ENCODE measurements at regions of chr2 and their contacts with region 1.

Region 1: DNA sequence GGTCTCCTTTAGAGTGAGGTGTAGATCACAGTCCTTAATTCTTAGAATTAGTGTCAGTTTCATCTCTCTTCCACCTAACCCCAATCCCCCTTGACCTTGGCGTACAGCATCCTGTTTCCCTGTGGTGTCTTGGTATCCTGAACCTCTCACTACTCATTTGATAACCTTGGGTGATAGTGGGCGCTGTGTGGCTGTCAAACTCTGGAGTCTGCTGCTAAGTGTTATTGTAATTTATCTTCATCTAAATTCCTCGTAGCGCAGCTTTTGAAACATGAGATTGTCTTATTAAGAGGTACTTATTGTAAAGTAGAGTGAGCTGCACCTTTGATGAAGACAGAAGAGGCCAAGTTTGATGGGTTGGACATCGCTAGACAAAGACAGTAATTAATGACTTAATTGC is 222.6 kb upstream of the SPRED2 start:
- DNase-seq: no peak
- ATAC-seq: no peak
- H3K4me3 Mint-ChIP-seq: no peak overlapping the region
- H3K27ac Mint-ChIP-seq: no peak overlapping the region
- H3K4me1 Mint-ChIP-seq: 0 out of 2 replicates have a peak, but pooled peaks cover 5% of the 10 kb centered on the region
- H3K27me3 Mint-ChIP-seq: no peaks in the 10 kb centered on the region
- CTCF ChIP-seq: no peak

Region 2: GRCh38 chr2:65638443-65638842 is 16.6 kb before region 1 on chr2:
- CTCF ChIA-PET with region 1: interaction called, 12 read pairs
- POLR2A ChIA-PET with region 1: no interaction called
- DNase-seq: no peak
- ATAC-seq: peak; percentile 77
- H3K4me3 Mint-ChIP-seq: no peak overlapping the region
- H3K27ac Mint-ChIP-seq: no peak overlapping the region
- H3K4me1 Mint-ChIP-seq: 0 out of 2 replicates have a peak, but pooled peaks cover 3% of the 10 kb centered on the region
- H3K27me3 Mint-ChIP-seq: no peaks in the 10 kb centered on the region
- CTCF ChIP-seq: no peak

Region 3: DNA sequence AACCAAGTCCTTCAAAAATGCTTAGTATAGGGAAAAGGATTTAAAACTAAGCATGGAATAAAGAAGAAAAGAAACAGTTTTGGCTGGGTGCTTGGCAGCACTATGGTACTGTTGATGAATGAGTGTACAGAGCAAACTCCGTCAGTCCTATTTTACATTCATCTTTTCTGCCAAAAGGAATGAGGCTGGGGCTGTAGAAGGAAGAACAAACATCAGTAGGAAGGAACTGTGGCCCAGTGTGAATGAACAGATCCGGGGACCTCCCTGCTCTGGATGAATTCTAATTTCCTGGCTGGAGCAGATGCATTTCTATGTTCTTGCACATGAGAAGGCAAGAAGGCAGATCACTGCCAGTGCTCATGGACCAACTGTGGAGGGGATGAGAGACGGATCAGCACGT is 306.0 kb after region 1 on chr2:
- CTCF ChIA-PET with region 1: no interaction called
- POLR2A ChIA-PET with region 1: no interaction called
- DNase-seq: no peak
- ATAC-seq: no peak
- H3K4me3 Mint-ChIP-seq: no peak overlapping the region
- H3K27ac Mint-ChIP-seq: no peak overlapping the region
- H3K4me1 Mint-ChIP-seq: peaks cover 18% of the 10 kb centered on the region
- H3K27me3 Mint-ChIP-seq: peaks cover 5% of the 10 kb centered on the region
- CTCF ChIP-seq: no peak